GM18951 (cell line): ENCODE measurements at regions of chr10 and their contacts with region 1.

Region 1: DNA sequence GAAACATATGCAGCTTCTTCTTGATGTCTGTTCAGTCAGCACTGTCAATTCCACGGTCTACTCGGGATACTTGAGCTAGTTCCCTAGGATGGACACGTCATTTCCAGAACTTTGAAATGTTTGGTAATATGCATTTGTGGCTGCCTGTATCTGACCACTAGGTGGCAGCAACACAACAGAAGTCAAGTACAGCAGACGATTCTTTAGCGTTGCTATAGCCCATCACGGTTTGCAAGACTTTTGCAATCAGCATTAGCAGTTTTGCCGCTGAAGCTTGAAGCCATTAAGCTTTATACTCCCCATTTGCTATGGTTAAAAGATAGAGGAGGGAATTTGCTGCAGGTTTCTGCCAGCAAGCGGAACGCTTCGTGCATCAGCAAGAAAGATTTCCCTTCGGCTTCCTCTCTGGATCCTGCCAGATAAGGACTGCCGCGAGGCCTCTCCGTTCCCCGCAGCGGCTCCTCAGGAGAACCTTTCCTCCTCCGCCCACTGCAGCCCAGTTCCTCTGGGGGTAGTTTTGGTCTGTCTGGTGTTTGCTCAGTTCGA is 63.5 kb downstream of the ABCC2 start:
- POLR2A ChIP-seq: no peak

Region 2: GRCh38 chr10:100046021-100046486 is 200.1 kb after region 1 on chr10:
- in situ Hi-C with region 1: loop called (anchors 10 kb)
- POLR2A ChIP-seq: no peak

Region 3: GRCh38 chr10:100065084-100065660 is 219.3 kb after region 1 on chr10:
- in situ Hi-C with region 1: no loop called
- POLR2A ChIP-seq: no peak